Activated CD4-positive, alpha-beta memory T cell treated with anti-CD3 and anti-CD28 coated beads for 36 hours (primary cell): ENCODE measurements at regions of chr15 and their contacts with region 1.

Region 1: GRCh38 chr15:90184786-90185569 is 16.2 kb upstream of the SEMA4B start:
- DNase-seq: peak; percentile 70
- H3K4me3 Mint-ChIP-seq: peak overlapping the region; percentile 81
- H3K27ac Mint-ChIP-seq: peak overlapping the region; percentile 78
- H3K4me1 Mint-ChIP-seq: peaks cover 14% of the 10 kb centered on the region
- H3K27me3 Mint-ChIP-seq: no peaks in the 10 kb centered on the region

Region 2: DNA sequence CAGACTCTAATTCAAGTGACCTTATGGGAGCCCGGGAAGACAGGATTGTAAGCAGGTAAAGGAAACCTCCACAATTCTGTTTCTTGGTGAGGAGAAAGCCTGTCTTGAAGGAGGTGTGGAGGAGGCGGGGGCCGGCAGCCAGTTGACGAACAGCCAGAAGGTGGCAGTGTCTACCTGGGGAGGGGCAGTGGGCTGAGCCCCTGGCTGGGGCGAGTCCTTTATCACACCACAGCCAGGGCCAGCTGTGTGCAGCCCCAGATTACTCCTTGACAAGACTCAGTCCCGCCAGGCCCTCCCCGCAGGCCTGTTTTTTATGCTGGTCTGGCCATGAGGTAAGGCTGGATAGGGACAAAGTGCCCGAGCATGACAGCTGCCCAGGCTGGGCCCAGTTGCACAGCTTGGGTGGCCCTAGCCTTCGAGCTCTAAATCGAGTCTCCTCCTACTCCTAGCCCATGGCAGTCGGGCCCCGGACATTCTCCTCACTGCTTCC is 41.8 kb before region 1 on chr15:
- CTCF ChIA-PET with region 1: no interaction called
- POLR2A ChIA-PET with region 1: no interaction called
- intact Hi-C with region 1: no loop called
- DNase-seq: peak; percentile 85
- H3K4me3 Mint-ChIP-seq: no peak overlapping the region
- H3K27ac Mint-ChIP-seq: peak overlapping the region; percentile 39
- H3K4me1 Mint-ChIP-seq: peaks cover 20% of the 10 kb centered on the region
- H3K27me3 Mint-ChIP-seq: no peaks in the 10 kb centered on the region

Region 3: DNA sequence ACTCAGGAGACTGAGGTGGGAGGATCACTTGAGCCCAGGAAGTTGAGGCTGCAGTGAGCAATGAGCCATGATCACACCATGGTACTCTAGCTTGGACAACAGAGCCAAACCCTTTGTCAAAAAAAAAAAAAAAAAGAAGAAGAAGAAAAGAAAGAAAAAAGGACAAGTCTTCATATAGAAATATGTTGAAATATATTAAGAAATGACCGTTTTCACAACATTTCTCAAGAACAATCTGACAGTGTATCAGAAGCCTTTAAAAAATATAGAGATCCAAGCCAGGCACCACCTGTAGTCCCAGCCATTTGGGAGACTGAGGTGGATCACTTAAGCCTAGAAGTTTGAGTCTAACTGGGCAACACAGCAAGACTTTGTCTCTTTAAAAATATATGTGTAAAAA is 13.4 kb before region 1 on chr15:
- CTCF ChIA-PET with region 1: no interaction called
- POLR2A ChIA-PET with region 1: no interaction called
- intact Hi-C with region 1: no loop called
- DNase-seq: no peak
- H3K4me3 Mint-ChIP-seq: no peak overlapping the region
- H3K27ac Mint-ChIP-seq: no peak overlapping the region
- H3K4me1 Mint-ChIP-seq: no peaks in the 10 kb centered on the region
- H3K27me3 Mint-ChIP-seq: no peaks in the 10 kb centered on the region

Region 4: GRCh38 chr15:90201130-90201949 is 16.4 kb after region 1 on chr15 and contains the start of gene SEMA4B:
- CTCF ChIA-PET with region 1: no interaction called
- POLR2A ChIA-PET with region 1: no interaction called
- intact Hi-C with region 1: loop called (anchors 2 kb)
- DNase-seq: peak; percentile 77
- H3K4me3 Mint-ChIP-seq: peak within 1 kb of the TSS; percentile 76
- H3K27ac Mint-ChIP-seq: peak within 1 kb of the TSS; percentile 62
- H3K4me1 Mint-ChIP-seq: peaks cover 18% of the 10 kb centered on the region
- H3K27me3 Mint-ChIP-seq: no peaks in the 10 kb centered on the region
- total RNA-seq, gene SEMA4B: 13.1 to 16.7 TPM